Heart left ventricle (tissue), 16 donors: ENCODE measurements at regions of chr22 and their contacts with region 1.

Region 1: DNA sequence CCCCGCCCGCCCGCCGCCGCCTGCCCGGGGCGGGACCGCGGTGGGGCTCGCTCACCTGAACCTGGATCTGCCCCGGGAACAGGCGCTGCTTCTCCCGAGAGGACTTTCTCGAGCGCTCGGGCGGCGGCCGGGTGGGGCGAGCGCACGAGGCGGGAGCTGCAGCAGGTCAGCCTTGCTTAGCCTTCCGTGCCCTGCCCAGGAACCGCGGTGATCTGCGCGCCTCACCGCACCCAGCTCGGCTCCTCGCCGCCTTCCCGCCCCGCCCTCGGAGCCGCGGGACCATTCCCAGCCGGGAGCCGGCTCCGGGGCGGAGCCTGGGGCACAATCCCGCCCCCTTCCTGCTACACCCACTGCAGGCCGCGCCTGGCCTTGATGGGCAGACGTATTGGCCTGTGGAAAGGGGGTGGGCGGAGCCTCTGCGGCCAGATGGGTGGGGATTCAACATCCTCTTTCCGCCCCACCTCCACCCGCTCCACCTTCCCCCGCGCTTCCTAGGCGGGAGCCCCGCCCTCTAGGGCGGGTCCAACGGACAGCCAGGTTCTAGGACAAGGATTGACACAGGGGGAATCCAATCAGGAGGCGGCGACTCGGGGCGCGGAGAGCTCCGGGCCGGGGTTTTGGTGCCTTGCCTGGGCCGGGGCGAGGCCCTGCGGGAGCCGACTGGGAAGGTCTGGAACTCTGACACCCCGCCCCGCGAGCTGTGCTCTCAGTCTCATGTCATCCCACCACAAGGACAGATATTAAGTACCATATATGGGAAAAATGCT is at the start of gene MYH9:
- DNase-seq: peak; percentile 100
- ATAC-seq: peak; percentile 94 to 98 (median 96)
- H3K4me3 ChIP-seq: peak within 1 kb of the TSS; percentile 72 to 99 (median 96)
- H3K27ac ChIP-seq: peak within 1 kb of the TSS; percentile 95 to 99 (median 98)
- H3K4me1 ChIP-seq: peaks cover 5 to 62% (median 30%) of the 10 kb centered on the region in 12 donors
- H3K27me3 ChIP-seq: no peaks in the 10 kb centered on the region
- CTCF ChIP-seq: no peak
- POLR2A ChIP-seq: peak; percentile 100
- total RNA-seq, gene MYH9: 126 to 482 (median 238) TPM

Region 2: GRCh38 chr22:36325154-36326031 is 62.5 kb before region 1 on chr22:
- intact Hi-C with region 1: loop called in 8 of 10 experiments (anchors 2 to 5 kb)
- DNase-seq: peak in 4 of 5 donors; percentile 60 to 74 (median 67)
- ATAC-seq: peak in 2 of 4 donors; percentile 4
- H3K4me3 ChIP-seq: no peak overlapping the region
- H3K27ac ChIP-seq: peak overlapping the region; percentile 89 to 100 (median 94)
- H3K4me1 ChIP-seq: peaks cover 41 to 100% (median 86%) of the 10 kb centered on the region in 12 donors
- H3K27me3 ChIP-seq: no peaks in the 10 kb centered on the region
- CTCF ChIP-seq: no peak
- POLR2A ChIP-seq: no peak

Region 3: DNA sequence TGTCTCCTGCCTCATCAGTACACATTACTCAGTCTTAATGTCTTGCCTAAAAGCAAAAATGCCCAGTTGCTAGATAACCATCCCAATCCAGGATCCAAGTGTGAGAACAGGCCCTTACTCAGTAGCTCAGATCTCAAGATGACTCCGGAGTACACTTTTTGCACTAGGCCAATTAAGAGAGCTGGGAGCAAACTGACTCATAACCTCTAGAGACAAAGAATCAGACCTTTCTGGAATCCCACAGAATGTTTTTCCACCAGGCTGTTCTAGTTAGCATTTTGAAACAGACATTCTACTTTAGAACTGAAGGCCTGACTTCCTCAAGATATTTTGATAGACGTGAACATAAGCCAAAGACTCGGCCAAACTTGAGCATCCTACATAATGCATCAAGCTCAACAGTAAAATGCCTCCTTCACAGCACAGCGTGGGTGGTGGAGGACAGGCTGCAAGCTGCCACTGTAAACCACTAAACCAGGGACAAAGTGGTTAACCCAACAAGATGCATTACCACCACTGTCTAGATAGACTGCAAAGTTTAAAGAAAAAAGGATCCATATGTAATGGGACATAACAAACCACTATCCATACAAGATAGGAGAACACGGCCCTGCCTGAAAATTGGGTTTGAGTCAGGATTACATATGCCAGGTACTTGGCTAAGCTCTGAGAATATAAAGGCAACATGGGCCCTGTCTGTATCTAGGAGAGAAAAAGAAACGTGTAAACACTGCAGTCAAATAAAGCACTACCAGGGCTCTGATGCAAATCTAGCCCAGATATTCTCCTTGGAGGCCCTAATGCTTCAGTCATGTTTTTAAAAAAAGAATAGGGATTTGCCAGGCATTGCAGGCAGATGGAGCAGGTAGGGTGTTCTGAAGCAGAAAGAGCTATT is 48.5 kb before region 1 on chr22:
- intact Hi-C with region 1: loop called in 4 of 10 experiments (anchors 5 kb)
- DNase-seq: no peak
- ATAC-seq: peak in 3 of 4 donors; percentile 16 to 53 (median 27)
- H3K4me3 ChIP-seq: no peak overlapping the region
- H3K27ac ChIP-seq: peak overlapping the region; percentile 3 to 100 (median 94)
- H3K4me1 ChIP-seq: peaks cover 46 to 100% (median 92%) of the 10 kb centered on the region in 12 donors
- H3K27me3 ChIP-seq: no peaks in the 10 kb centered on the region
- CTCF ChIP-seq: no peak
- POLR2A ChIP-seq: no peak

Region 4: DNA sequence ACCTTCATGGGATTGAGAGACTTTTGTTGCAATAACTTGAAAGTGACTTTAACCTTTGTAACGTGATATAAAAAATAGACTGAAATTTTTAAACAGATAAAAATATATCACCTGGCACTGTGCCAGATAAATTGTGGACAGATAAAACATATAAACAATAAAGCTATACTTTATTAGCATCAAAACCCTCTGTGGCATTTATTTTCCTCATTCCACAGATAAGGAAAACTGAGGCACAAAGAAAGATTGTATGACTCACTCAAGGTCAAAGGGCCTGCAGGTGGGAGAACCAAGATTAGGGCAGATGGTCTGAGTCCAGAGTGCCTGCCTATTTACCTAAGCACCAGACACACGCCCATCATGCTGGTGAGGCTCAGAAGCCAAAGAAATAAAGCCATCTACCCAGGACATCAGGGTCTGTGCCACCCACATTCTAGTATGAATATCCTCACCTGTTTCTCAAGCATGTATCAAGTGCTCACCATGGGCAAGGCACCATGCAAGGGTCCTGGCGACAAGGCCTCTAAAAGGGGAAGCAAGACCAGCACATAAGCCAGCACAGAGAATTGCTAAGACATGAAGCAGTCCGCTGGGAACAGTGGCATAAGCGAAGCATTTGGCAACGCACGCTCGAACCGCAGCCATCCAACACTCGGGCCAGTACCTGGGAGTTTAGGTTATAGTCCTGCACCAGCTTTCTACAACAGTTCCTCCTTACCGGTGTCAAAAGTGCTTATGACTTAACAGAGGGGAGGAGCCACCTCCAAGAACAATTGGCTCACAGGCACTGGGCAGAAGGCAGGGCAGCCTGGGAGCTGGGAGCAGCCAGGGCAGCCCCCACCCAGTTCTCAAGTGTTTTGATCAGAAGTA is 17.8 kb before region 1 on chr22:
- intact Hi-C with region 1: loop called in 1 of 10 experiments (anchors 2 kb)
- DNase-seq: peak in 3 of 5 donors; percentile 62 to 67 (median 64)
- ATAC-seq: peak; percentile 59 to 76 (median 63)
- H3K4me3 ChIP-seq: peak overlapping the region in 9 of 12 donors; percentile 7 to 39 (median 27)
- H3K27ac ChIP-seq: peak overlapping the region; percentile 50 to 99 (median 88)
- H3K4me1 ChIP-seq: peaks cover 49 to 100% (median 100%) of the 10 kb centered on the region in 12 donors
- H3K27me3 ChIP-seq: no peaks in the 10 kb centered on the region
- CTCF ChIP-seq: no peak
- POLR2A ChIP-seq: no peak

Region 5: GRCh38 chr22:36461669-36462649 is 74.0 kb after region 1 on chr22:
- intact Hi-C with region 1: loop called in 8 of 10 experiments (anchors 5 to 10 kb)
- DNase-seq: peak; percentile 61 to 75 (median 66)
- ATAC-seq: peak; percentile 4 to 33 (median 24)
- H3K4me3 ChIP-seq: no peak overlapping the region
- H3K27ac ChIP-seq: peak overlapping the region; percentile 73 to 98 (median 94)
- H3K4me1 ChIP-seq: peaks cover 12 to 78% (median 69%) of the 10 kb centered on the region in 12 donors
- H3K27me3 ChIP-seq: no peaks in the 10 kb centered on the region
- CTCF ChIP-seq: no peak
- POLR2A ChIP-seq: no peak